ENCODE measurements at regions of chr14 and their contacts with region 1.

Region 1: DNA sequence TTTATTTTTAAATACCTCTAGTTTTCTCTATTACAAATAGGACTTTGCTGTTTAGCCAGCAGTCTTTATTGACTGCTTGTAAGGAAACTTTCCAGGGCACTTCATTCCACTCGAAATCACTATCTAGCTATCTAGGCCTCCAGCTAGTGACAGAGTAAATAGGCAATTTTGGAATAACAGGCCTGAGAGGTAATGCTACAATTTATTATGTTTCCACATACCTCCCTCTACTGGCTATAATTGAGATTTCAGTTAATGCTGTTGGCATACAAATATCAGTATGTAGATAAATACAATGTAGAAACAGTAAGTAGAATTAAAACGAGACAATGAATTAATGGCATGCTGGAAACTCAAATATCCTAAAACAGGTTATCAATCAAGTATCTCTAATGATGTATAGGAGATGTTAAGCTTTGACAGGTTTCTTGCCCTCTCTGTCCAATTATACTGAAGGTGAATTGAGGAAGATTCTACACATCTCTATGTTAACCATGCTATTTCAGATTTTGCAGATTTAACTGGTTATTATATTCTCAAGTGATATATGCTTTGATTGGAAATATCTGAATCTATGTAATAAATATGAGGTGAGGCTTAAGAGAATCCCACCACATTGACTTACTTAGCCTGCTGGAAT is 7.2 kb downstream of the DTD2 start:
- DNase-seq: no peak

Region 2: DNA sequence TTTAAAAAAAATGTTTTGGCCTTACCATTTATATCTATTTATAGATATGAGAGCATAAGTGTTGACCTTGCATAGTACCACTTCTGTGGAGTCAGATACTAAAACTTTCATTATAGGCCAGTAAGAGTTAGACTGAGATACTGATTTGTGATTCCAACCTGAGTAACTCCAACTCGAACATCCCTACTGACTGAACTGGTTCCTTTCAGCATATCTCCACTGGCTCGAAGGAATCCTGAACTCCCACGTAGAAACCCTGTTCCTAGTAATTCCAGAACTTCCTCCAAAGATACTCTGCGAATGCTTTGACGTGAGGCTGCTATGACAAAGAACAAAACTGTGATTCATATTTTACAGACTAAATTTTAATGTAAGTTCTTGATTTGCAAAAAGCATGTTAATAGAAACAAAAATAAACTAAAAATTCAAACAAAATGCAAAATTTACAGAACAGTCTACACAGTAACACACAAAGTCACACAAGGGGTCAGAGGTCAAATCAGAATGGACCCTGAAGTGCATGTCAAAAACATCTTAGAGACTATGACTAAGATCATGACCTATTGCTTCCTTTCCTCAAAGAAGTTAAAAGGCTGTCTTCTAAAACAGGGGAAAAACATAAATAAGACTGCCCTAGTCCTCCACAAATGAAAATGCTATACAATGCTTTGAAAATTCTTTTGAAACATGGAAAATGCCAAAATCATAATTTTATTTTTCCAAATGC is 61.2 kb before region 1 on chr14:
- intact Hi-C with region 1: loop called in 1 of 2 experiments (anchors 10 kb)
- DNase-seq: no peak